ENCODE measurements at regions of chr5 and their contacts with region 1.

Region 1: GRCh38 chr5:31809050-31809870 is 170.3 kb downstream of the PDZD2 start:
- DNase-seq: peak; percentile 48
- H3K4me3 ChIP-seq: no peak overlapping the region
- H3K27ac ChIP-seq: no peak overlapping the region
- H3K4me1 ChIP-seq: no peaks in the 10 kb centered on the region
- H3K27me3 ChIP-seq: no peaks in the 10 kb centered on the region
- CTCF ChIP-seq: peak; percentile 43 to 64
- POLR2A ChIP-seq: no peak

Region 2: DNA sequence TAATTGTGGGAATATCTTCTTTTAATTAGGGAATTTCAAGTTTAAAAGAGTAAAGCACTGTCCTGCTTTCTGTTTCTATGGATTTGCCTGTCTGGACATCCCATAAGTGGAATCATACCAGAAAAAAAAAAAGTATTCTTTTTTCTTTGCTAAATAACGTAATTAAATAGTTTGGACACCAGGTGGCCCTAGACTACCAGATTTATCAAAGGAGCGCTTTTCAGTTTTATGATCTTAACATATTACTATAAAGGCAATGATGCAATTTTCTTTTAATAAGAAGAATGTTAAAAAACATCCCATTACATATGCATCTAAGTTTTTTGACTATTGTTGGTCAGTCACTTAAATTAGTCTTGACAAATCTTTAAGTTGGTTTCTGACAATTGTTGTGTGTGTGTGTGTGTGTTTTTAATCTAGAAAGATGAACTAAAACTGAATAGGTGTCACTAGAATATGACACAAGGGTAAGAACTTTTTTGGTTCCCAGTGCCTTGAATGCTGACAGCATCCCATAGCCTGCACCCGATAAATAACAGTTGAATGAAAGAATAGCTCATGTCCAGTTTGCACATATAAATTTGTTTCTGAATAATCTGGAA is 227.7 kb before region 1 on chr5:
- CTCF ChIA-PET with region 1: interaction called, 19 read pairs
- POLR2A ChIA-PET with region 1: no interaction called
- dilution Hi-C with region 1: no loop called
- intact Hi-C with region 1: loop called (anchors 1 kb)
- DNase-seq: peak; percentile 32
- H3K4me3 ChIP-seq: no peak overlapping the region
- H3K27ac ChIP-seq: no peak overlapping the region
- H3K4me1 ChIP-seq: no peaks in the 10 kb centered on the region
- H3K27me3 ChIP-seq: peaks cover 0 to 2% of the 10 kb centered on the region in 2 experiments
- CTCF ChIP-seq: peak; percentile 8 to 14
- POLR2A ChIP-seq: no peak